Ascending aorta (tissue), 2 donors: ENCODE measurements at regions of chr12 and their contacts with region 1.

Region 1: DNA sequence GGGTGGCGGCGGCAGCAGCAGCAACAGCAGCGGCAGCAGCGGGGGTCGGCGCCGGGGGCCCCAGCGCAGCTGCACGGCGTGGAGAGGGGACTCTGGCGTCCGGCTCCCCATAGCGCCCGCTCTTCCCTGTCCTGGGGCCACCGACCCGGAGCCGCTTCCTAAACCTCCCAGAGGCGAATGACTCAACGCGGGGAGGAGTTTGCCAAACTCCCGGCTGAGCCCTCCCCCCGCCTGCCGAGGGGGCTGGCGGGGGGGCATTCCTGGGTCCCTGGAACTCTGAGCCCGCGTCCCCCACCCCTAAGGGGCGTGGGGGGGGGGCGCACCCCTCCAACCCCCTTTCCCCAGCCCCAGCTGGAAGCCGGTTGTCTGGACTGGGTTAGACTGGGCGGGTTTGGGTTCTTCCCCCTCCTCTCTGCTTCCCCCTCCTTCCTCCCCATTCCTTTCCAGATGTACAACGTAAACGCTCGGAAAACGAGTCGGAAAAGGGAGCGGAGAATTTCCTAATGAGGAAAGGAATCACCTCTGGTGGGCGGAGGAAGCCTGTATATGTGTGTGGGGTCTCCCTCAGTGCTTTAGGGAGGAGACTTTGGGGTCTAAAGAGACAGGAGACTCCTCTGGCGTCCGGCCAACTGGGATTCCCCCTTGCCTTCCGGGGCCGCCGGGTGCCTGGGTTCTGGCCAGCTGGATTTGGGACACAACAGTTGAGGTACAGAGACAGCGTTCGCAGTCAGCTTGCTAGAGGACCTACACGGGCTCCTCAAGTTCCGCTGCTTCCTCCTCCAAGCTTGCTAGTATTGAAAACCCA is at the start of gene ITGA5:
- DNase-seq: peak in 1 of 2 donors; percentile 93
- H3K4me3 ChIP-seq: peak within 1 kb of the TSS; percentile 70 to 98
- H3K27ac ChIP-seq: peak within 1 kb of the TSS; percentile 97
- H3K4me1 ChIP-seq: peaks cover 0 to 34% of the 10 kb centered on the region in 2 donors
- H3K27me3 ChIP-seq: no peaks in the 10 kb centered on the region
- CTCF ChIP-seq: no peak
- total RNA-seq, gene ITGA5: 973 TPM

Region 2: GRCh38 chr12:54398995-54399793 is 20.1 kb before region 1 on chr12:
- intact Hi-C with region 1: loop called (anchors 2 kb)
- DNase-seq: peak in 1 of 2 donors; percentile 95
- H3K4me3 ChIP-seq: no peak overlapping the region
- H3K27ac ChIP-seq: peak overlapping the region in 1 of 2 donors; percentile 27
- H3K4me1 ChIP-seq: no peaks in the 10 kb centered on the region
- H3K27me3 ChIP-seq: no peaks in the 10 kb centered on the region
- CTCF ChIP-seq: peak; percentile 93 to 96 (median 95)

Region 3: DNA sequence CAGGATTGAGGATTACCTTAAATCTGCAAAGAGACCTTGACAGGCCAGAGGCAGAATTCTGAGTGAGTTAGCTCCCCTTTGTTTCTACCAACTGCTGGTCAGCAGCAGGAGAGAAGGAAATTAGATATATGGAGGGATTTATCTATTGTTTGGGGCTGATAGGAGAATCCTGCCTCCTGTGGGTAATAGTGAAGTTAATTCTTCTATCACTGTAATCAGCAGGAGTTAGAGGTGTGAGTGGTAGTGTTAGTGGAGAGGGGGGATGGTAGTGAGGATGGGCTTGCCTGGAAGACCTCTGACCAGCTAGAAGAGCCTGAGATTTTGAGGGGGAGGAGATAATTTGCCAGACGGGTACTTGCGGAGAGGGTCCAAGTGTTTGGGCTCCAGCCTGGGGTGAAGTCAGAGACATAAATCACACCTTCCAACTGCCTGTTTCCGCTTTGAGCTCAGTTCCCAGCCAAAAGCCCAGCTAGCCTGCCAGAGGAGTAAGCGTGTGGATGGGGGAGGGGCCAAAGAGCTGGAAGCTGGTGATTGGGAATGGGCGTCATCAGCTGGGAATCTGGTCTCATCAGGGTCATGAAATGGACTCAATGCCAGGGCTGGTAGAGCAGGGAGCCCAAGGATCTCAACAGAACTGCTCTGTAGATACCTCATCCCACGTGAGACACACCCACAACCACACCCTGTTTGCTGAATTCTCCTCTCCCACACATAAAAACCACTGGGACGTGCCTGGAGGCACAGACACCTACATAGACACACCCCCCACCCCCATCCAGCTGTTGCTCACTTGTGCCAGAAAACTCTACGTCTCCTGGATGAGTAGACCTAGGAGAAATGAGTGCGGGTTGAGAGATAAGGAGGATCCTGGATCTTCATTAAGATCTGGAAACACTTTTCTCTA is 12.9 kb after region 1 on chr12:
- intact Hi-C with region 1: loop called (anchors 1 kb)
- DNase-seq: peak; percentile 79 to 96
- H3K4me3 ChIP-seq: peak overlapping the region in 1 of 2 donors; percentile 36
- H3K27ac ChIP-seq: peak overlapping the region; percentile 97
- H3K4me1 ChIP-seq: peaks cover 23 to 51% of the 10 kb centered on the region in 2 donors
- H3K27me3 ChIP-seq: no peaks in the 10 kb centered on the region
- CTCF ChIP-seq: no peak